Activated CD4-positive, alpha-beta T cell treated with anti-CD3 and anti-CD28 coated beads, Interleukin-2, amount 10 ng/mL, durations not matched to agents 24 days and 14 days (primary cell): ENCODE measurements at regions of chr2 and their contacts with region 1.

Region 1: GRCh38 chr2:213151437-213152064 is at the start of gene IKZF2:
- DNase-seq: peak; percentile 88
- H3K4me3 Mint-ChIP-seq: peak within 1 kb of the TSS; percentile 88
- H3K27ac Mint-ChIP-seq: peak within 1 kb of the TSS; percentile 73
- H3K4me1 Mint-ChIP-seq: peaks cover 28% of the 10 kb centered on the region
- H3K27me3 Mint-ChIP-seq: peaks cover 59% of the 10 kb centered on the region
- total RNA-seq, gene IKZF2: 1.7 and 1.9 TPM in 2 replicates

Region 2: GRCh38 chr2:212539072-212539880 is 612.3 kb before region 1 on chr2:
- intact Hi-C with region 1: loop called (anchors 2 kb)
- DNase-seq: no peak
- H3K4me3 Mint-ChIP-seq: peak overlapping the region; percentile 48
- H3K27ac Mint-ChIP-seq: no peak overlapping the region
- H3K4me1 Mint-ChIP-seq: peaks cover 7% of the 10 kb centered on the region
- H3K27me3 Mint-ChIP-seq: peaks cover 55% of the 10 kb centered on the region

Region 3: DNA sequence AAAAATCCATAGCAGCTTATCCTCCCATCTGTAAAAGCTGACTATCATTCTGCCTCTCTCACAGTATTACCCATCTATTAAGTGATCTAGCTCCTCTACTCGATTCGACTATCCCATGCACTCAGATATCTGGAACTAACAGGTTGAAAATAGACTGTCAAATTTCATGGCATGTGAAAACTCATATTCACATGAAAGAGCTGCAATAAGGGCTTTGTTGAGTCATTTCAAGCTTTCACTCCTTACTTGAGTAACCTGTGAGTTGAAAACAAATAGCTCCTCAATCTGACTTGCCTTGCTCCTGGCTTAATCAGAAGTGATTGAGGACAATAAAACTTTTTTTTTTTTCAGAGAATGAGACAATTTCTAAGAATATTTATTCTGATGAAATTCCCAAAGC is 420.6 kb before region 1 on chr2:
- intact Hi-C with region 1: loop called (anchors 2 kb)
- DNase-seq: no peak
- H3K4me3 Mint-ChIP-seq: no peak overlapping the region
- H3K27ac Mint-ChIP-seq: no peak overlapping the region
- H3K4me1 Mint-ChIP-seq: peaks cover 2% of the 10 kb centered on the region
- H3K27me3 Mint-ChIP-seq: no peaks in the 10 kb centered on the region

Region 4: DNA sequence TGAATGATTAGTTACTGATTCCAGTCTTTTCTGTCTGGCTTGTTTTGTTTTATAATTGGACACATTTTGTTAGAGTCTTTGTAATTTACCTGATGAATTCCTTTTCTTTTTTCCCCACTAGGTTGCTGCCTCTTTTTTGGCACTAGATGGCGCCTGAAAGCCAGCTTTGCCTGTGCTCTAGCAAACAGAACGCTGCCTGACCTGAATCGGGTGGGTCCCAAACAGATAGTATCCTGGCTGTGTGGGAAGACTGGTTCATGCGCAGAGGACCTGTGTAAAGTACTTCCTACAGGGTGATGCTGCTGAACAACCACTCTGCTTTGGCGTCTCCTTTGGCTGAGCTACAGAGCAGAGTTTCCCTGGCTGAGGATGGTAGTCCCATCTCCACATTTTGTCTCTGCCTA is 288.4 kb before region 1 on chr2:
- intact Hi-C with region 1: loop called (anchors 1 kb)
- DNase-seq: peak; percentile 60
- H3K4me3 Mint-ChIP-seq: no peak overlapping the region
- H3K27ac Mint-ChIP-seq: no peak overlapping the region
- H3K4me1 Mint-ChIP-seq: no peaks in the 10 kb centered on the region
- H3K27me3 Mint-ChIP-seq: no peaks in the 10 kb centered on the region

Region 5: GRCh38 chr2:212926940-212927339 is 224.6 kb before region 1 on chr2:
- intact Hi-C with region 1: no loop called
- DNase-seq: no peak
- H3K4me3 Mint-ChIP-seq: no peak overlapping the region
- H3K27ac Mint-ChIP-seq: no peak overlapping the region
- H3K4me1 Mint-ChIP-seq: no peaks in the 10 kb centered on the region
- H3K27me3 Mint-ChIP-seq: no peaks in the 10 kb centered on the region

Region 6: GRCh38 chr2:213119061-213119856 is 32.3 kb before region 1 on chr2:
- intact Hi-C with region 1: loop called (anchors 1 kb)
- DNase-seq: peak; percentile 58
- H3K4me3 Mint-ChIP-seq: peak overlapping the region; percentile 8
- H3K27ac Mint-ChIP-seq: peak overlapping the region; percentile 86
- H3K4me1 Mint-ChIP-seq: peaks cover 15% of the 10 kb centered on the region
- H3K27me3 Mint-ChIP-seq: peaks cover 1% of the 10 kb centered on the region